ENCODE measurements at regions of chrX and their contacts with region 1.

Region 1: DNA sequence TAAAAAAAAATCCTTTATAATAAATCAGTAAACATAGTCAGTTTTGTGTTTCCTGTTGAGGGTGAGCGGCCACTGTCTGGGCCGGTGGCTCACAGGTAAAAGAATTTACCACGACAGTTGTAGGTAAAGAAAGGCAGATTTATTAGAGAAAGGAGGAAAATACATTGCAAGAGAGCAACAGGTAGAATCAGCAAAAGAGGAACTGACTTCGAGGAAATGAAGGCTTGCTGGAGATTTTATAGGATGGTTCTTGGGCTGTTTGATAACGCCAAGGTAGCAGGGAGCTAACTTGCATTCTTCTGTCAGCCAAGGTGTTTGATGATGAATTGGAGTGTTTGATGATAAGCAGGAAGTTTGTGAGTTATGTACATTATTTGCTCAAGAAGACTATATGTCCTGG is 2.8 kb downstream of the ZNF157 start:
- DNase-seq: no peak
- H3K4me3 ChIP-seq: no peak overlapping the region
- H3K27ac ChIP-seq: no peak overlapping the region
- H3K4me1 ChIP-seq: no peaks in the 10 kb centered on the region
- H3K27me3 ChIP-seq: no peaks in the 10 kb centered on the region
- CTCF ChIP-seq: no peak

Region 2: GRCh38 chrX:47158131-47158530 is 215.1 kb before region 1 on chrX:
- CTCF ChIA-PET with region 1: no interaction called
- dilution Hi-C with region 1: no loop called
- in situ Hi-C with region 1: no loop called
- intact Hi-C with region 1: no loop called
- DNase-seq: no peak
- H3K4me3 ChIP-seq: no peak overlapping the region
- H3K27ac ChIP-seq: no peak overlapping the region
- H3K4me1 ChIP-seq: no peaks in the 10 kb centered on the region
- H3K27me3 ChIP-seq: no peaks in the 10 kb centered on the region
- CTCF ChIP-seq: no peak

Region 3: GRCh38 chrX:47321386-47321785 is 51.8 kb before region 1 on chrX:
- CTCF ChIA-PET with region 1: no interaction called
- dilution Hi-C with region 1: loop called (anchors 5 kb)
- in situ Hi-C with region 1: no loop called
- intact Hi-C with region 1: no loop called
- DNase-seq: peak; percentile 39
- H3K4me3 ChIP-seq: no peak overlapping the region
- H3K27ac ChIP-seq: no peak overlapping the region
- H3K4me1 ChIP-seq: no peaks in the 10 kb centered on the region
- H3K27me3 ChIP-seq: no peaks in the 10 kb centered on the region
- CTCF ChIP-seq: no peak